ENCODE measurements at regions of chr2 and their contacts with region 1.

Region 1: GRCh38 chr2:240648650-240649275 is 23.5 kb downstream of the GPR35 start:
- DNase-seq: no peak
- H3K4me3 ChIP-seq: no peak overlapping the region
- H3K27me3 ChIP-seq: peaks cover 23% of the 10 kb centered on the region
- CTCF ChIP-seq: no peak

Region 2: GRCh38 chr2:240624950-240625621 is 23.7 kb before region 1 on chr2 and contains the start of gene GPR35:
- CTCF ChIA-PET with region 1: no interaction called
- POLR2A ChIA-PET with region 1: interaction called, 13 read pairs
- DNase-seq: peak; percentile 23
- H3K4me3 ChIP-seq: no peak within 1 kb of the TSS
- H3K27me3 ChIP-seq: no peaks in the 10 kb centered on the region
- CTCF ChIP-seq: no peak
- polyA plus RNA-seq, gene GPR35: 0.10 and 0.17 TPM in 2 replicates

Region 3: DNA sequence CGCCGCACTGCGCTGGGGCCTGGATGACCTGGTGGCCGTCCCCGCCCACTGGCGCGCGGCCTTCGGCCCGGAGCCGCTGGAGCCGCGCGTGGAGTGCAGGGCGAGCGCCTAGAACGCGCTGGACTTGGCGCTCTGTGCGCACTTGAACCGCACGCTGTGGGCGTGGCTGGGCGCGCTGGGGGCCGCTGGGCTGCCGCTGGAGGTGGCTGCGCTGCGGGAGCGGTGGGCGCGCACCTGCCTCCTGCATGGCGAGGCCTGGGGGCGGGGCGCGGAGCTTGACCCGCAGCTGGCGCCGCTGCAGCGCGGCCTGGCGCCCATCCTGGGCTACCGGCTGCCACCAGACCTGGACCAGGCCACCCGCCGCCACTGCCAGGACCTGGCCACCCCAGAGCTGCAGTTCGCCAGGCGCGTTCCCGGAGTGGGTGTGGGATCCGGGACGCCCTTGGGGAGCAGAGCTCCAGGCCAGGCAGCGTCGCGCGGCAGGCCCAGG is 24.0 kb after region 1 on chr2:
- CTCF ChIA-PET with region 1: no interaction called
- POLR2A ChIA-PET with region 1: no interaction called
- DNase-seq: no peak
- H3K4me3 ChIP-seq: no peak overlapping the region
- H3K27me3 ChIP-seq: peaks cover 8% of the 10 kb centered on the region
- CTCF ChIP-seq: no peak